GM13976 (cell line): ENCODE measurements at regions of chr11 and their contacts with region 1.

Region 1: GRCh38 chr11:58654079-58654907 is 31.8 kb downstream of the CNTF start:
- DNase-seq: peak; percentile 57
- CTCF ChIP-seq: peak; percentile 95

Region 2: GRCh38 chr11:58276151-58276550 is 378.1 kb before region 1 on chr11:
- in situ Hi-C with region 1: no loop called
- DNase-seq: no peak
- CTCF ChIP-seq: no peak

Region 3: GRCh38 chr11:58503361-58503856 is 150.9 kb before region 1 on chr11:
- in situ Hi-C with region 1: no loop called
- DNase-seq: peak; percentile 40
- CTCF ChIP-seq: no peak

Region 4: GRCh38 chr11:58788355-58789023 is 134.2 kb after region 1 on chr11:
- in situ Hi-C with region 1: loop called (anchors 10 kb)
- DNase-seq: peak; percentile 22
- CTCF ChIP-seq: peak; percentile 75

Region 5: GRCh38 chr11:59053387-59053786 is 399.1 kb after region 1 on chr11:
- in situ Hi-C with region 1: loop called (anchors 25 kb)
- DNase-seq: peak; percentile 7
- CTCF ChIP-seq: peak; percentile 51